PC-9 (cell line): ENCODE measurements at regions of chr1 and their contacts with region 1.

Region 1: DNA sequence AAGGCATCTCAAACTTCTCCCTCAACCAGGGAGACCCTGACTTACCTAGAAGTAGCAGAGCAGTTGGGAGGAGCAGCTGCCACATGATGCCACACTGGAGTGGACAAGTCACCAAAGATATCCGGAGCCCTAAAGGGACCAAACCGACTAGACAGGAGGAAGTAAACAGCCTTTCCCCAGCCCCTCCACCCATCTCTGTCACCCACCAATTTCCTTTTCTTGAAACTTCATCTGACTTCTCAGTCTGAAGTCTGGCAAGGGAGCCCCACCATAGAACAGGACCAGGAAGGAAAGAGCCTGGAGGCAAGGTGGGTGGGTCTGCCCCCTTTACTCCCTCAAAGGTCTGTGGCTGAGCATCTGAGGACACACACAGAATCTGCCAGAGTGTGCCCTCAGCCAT is at the start of gene FCGR3A:
- DNase-seq: no peak
- H3K4me3 ChIP-seq: no peak within 1 kb of the TSS
- H3K27ac ChIP-seq: no peak within 1 kb of the TSS
- H3K4me1 ChIP-seq: no peaks in the 10 kb centered on the region
- H3K27me3 ChIP-seq: no peaks in the 10 kb centered on the region
- CTCF ChIP-seq: no peak
- total RNA-seq, gene FCGR3A: not detected in 2 replicates

Region 2: GRCh38 chr1:161021165-161021960 is 528.3 kb before region 1 on chr1:
- CTCF ChIA-PET with region 1: no interaction called
- POLR2A ChIA-PET with region 1: no interaction called
- intact Hi-C with region 1: no loop called
- DNase-seq: peak; percentile 99
- H3K4me3 ChIP-seq: peak overlapping the region; percentile 93
- H3K27ac ChIP-seq: peak overlapping the region; percentile 97
- H3K4me1 ChIP-seq: peaks cover 49% of the 10 kb centered on the region
- H3K27me3 ChIP-seq: no peaks in the 10 kb centered on the region
- CTCF ChIP-seq: no peak

Region 3: GRCh38 chr1:161631076-161631475 is 81.4 kb after region 1 on chr1 and contains the start of gene FCGR3B:
- CTCF ChIA-PET with region 1: no interaction called
- POLR2A ChIA-PET with region 1: no interaction called
- intact Hi-C with region 1: loop called (anchors 5 kb)
- DNase-seq: no peak
- H3K4me3 ChIP-seq: no peak within 1 kb of the TSS
- H3K27ac ChIP-seq: no peak within 1 kb of the TSS
- H3K4me1 ChIP-seq: no peaks in the 10 kb centered on the region
- H3K27me3 ChIP-seq: no peaks in the 10 kb centered on the region
- CTCF ChIP-seq: no peak
- total RNA-seq, gene FCGR3B: not detected in 2 replicates